Endothelial cell of umbilical vein (primary cell): ENCODE measurements at regions of chr5 and their contacts with region 1.

Region 1: DNA sequence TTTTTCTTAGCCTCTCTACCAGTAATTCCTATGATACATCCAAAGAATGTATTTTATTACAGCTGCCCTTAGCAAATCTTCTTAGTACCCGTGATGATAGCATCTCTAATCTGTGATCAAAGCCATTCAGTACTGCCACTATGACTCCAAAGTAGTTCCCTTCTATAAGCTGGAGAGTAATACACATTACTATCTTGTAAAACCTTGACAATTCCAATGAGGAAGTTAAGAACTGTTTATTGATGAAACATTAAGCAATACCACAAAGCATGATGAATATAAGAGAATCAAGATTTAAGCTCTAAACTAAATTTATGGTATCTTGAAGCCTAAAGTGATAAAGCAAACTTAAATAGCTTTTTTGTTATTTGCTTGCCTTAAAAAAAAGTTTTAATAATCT is 86.1 kb downstream of the SMIM23 start:
- DNase-seq: no peak
- H3K4me3 ChIP-seq: no peak overlapping the region
- H3K27ac ChIP-seq: no peak overlapping the region
- H3K4me1 ChIP-seq: peaks cover 13% of the 10 kb centered on the region
- H3K27me3 ChIP-seq: no peaks in the 10 kb centered on the region
- CTCF ChIP-seq: no peak
- POLR2A ChIP-seq: no peak

Region 2: GRCh38 chr5:171858303-171858702 is 13.4 kb before region 1 on chr5:
- CTCF ChIA-PET with region 1: interaction called, 14 read pairs
- POLR2A ChIA-PET with region 1: no interaction called
- dilution Hi-C with region 1: no loop called
- intact Hi-C with region 1: no loop called
- DNase-seq: no peak
- H3K4me3 ChIP-seq: no peak overlapping the region
- H3K27ac ChIP-seq: no peak overlapping the region
- H3K4me1 ChIP-seq: no peaks in the 10 kb centered on the region
- H3K27me3 ChIP-seq: no peaks in the 10 kb centered on the region
- CTCF ChIP-seq: peak; percentile 37 to 48
- POLR2A ChIP-seq: no peak

Region 3: GRCh38 chr5:171939951-171940350 is 68.2 kb after region 1 on chr5:
- CTCF ChIA-PET with region 1: no interaction called
- POLR2A ChIA-PET with region 1: no interaction called
- dilution Hi-C with region 1: no loop called
- intact Hi-C with region 1: no loop called
- DNase-seq: no peak
- H3K4me3 ChIP-seq: no peak overlapping the region
- H3K27ac ChIP-seq: no peak overlapping the region
- H3K4me1 ChIP-seq: no peaks in the 10 kb centered on the region
- H3K27me3 ChIP-seq: no peaks in the 10 kb centered on the region
- CTCF ChIP-seq: no peak
- POLR2A ChIP-seq: no peak

Region 4: GRCh38 chr5:172052450-172053236 is 180.9 kb after region 1 on chr5:
- CTCF ChIA-PET with region 1: no interaction called
- POLR2A ChIA-PET with region 1: no interaction called
- dilution Hi-C with region 1: no loop called
- intact Hi-C with region 1: no loop called
- DNase-seq: peak; percentile 46
- H3K4me3 ChIP-seq: no peak overlapping the region
- H3K27ac ChIP-seq: no peak overlapping the region
- H3K4me1 ChIP-seq: peaks cover 16% of the 10 kb centered on the region
- H3K27me3 ChIP-seq: no peaks in the 10 kb centered on the region
- CTCF ChIP-seq: no peak
- POLR2A ChIP-seq: no peak